ENCODE measurements at regions of chr17 and their contacts with region 1.

Region 1: GRCh38 chr17:38729886-38730525 is at the start of gene CISD3:
- DNase-seq: peak in 1 of 2 experiments; percentile 84
- H3K4me3 ChIP-seq: peak within 1 kb of the TSS; percentile 48 to 72 (median 63)
- H3K27ac ChIP-seq: no peak within 1 kb of the TSS
- H3K4me1 ChIP-seq: peaks cover 0 to 10% (median 5%) of the 10 kb centered on the region in 4 experiments; a peak in 5 of 7 replicates
- H3K27me3 ChIP-seq: peaks cover 0 to 17% (median 7%) of the 10 kb centered on the region in 4 experiments; a peak in 3 of 7 replicates
- CTCF ChIP-seq: peak; percentile 59 to 73 (median 62)
- EP300 ChIP-seq: no peak
- POLR2A ChIP-seq: 0 out of 3 replicates have a peak, but pooled peaks of 1 of the 2 experiments have one; percentile 17
- RAD21 ChIP-seq: peak in 1 of 2 experiments; percentile 47; a peak in 2 of 4 replicates
- total RNA-seq, gene CISD3: 11.1 and 11.6 TPM in 2 replicates

Region 2: GRCh38 chr17:38711792-38712571 is 18.0 kb before region 1 on chr17:
- CTCF ChIA-PET with region 1: interaction called, 49 read pairs
- POLR2A ChIA-PET with region 1: interaction called, 13 read pairs
- DNase-seq: no peak
- H3K4me3 ChIP-seq: no peak overlapping the region
- H3K27ac ChIP-seq: no peak overlapping the region
- H3K4me1 ChIP-seq: peaks cover 9 to 36% (median 25%) of the 10 kb centered on the region in 4 experiments
- H3K27me3 ChIP-seq: peaks cover 1 to 26% (median 15%) of the 10 kb centered on the region in 4 experiments
- CTCF ChIP-seq: no peak
- EP300 ChIP-seq: no peak
- POLR2A ChIP-seq: no peak
- RAD21 ChIP-seq: no peak

Region 3: DNA sequence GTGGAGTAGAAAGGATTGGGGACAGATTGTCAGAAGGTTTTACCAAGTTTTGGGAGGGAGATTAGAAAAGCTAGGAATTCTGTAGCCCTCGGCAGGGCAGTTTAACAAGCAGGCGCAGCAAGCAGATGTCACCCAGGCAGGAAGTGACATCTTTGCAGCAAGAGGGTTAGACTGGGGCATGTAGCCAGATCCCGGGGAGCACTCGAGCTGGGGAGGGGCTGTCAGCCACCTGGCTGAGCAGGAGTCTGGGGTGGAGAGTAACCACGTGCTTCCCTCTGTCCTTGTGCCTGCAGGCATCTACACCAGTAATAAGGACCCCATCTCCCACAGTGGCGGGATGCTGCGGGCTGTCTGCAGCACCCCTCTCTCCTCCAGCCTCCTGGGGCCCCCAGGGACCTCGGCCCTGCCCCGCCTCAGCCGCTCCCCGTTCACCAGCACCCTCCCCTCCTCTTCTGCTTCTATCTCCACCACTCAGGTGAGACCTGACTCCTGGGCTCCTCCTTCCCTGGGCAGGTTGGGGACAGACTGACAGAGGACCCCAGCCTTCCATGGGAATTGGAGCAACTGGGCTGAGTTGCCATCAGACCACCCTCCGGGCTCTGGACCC is 12.8 kb before region 1 on chr17:
- CTCF ChIA-PET with region 1: interaction called, 49 read pairs
- POLR2A ChIA-PET with region 1: interaction called, 29 read pairs
- DNase-seq: no peak
- H3K4me3 ChIP-seq: no peak overlapping the region
- H3K27ac ChIP-seq: no peak overlapping the region
- H3K4me1 ChIP-seq: peaks cover 14 to 41% (median 25%) of the 10 kb centered on the region in 4 experiments
- H3K27me3 ChIP-seq: peaks cover 0 to 11% (median 7%) of the 10 kb centered on the region in 4 experiments; a peak in 6 of 7 replicates
- CTCF ChIP-seq: no peak
- EP300 ChIP-seq: no peak
- POLR2A ChIP-seq: no peak
- RAD21 ChIP-seq: no peak

Region 4: GRCh38 chr17:38742411-38743308 is 12.7 kb after region 1 on chr17:
- CTCF ChIA-PET with region 1: interaction called, 40 read pairs
- POLR2A ChIA-PET with region 1: interaction called, 40 read pairs
- DNase-seq: no peak
- H3K4me3 ChIP-seq: peak overlapping the region in 2 of 4 experiments; percentile 13 to 39; a peak in 2 of 8 replicates
- H3K27ac ChIP-seq: 0 out of 2 replicates have a peak overlapping the region, but pooled peaks have one; percentile 26
- H3K4me1 ChIP-seq: peaks cover 7 to 37% (median 22%) of the 10 kb centered on the region in 4 experiments
- H3K27me3 ChIP-seq: no peaks in the 10 kb centered on the region
- CTCF ChIP-seq: no peak
- EP300 ChIP-seq: no peak
- POLR2A ChIP-seq: no peak
- RAD21 ChIP-seq: no peak

Region 5: DNA sequence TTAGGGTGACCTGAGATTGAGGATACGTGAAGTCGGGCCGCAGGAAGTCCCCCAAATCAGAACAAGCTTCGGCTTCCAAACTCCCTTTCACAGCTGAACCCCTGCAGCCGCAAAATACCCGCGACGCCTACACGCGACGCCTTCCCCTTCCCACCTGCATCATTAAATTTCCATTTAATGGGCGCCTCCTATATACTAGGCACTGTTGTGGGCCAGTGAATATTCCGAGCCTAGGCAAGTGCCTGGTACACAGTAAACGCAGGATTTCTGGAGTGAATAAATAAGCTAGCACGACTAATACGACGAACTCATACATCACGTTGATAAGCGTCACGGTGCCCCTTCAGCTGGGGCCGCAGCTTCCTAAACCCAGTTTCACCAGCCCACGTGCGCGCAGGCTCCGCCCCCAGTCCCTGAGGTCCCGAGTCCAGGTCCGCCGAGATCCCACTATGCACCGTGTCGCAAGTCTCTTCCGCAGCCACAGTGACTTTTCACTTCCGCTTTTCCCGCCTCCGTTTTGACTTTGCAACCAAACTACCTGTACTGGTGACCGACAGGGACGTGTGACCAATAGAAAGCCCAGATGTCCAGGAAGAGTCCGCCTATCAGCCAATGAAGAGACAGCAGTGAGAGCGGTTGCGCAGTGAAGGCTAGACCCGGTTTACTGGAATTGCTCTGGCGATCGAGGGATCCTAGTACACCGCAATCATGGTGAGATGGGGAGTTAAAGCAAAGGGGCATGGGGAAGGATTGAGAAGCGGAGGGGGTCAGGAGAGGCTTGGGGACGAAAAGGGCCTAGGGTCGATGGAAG is 22.3 kb after region 1 on chr17 and contains the start of gene PSMB3:
- CTCF ChIA-PET with region 1: interaction called, 10 read pairs
- POLR2A ChIA-PET with region 1: interaction called, 40 read pairs
- DNase-seq: peak; percentile 88 to 96
- H3K4me3 ChIP-seq: peak within 1 kb of the TSS; percentile 86 to 99 (median 90)
- H3K27ac ChIP-seq: peak within 1 kb of the TSS; percentile 67; the same call in 1 of the 2 replicates
- H3K4me1 ChIP-seq: peaks cover 0 to 5% (median 3%) of the 10 kb centered on the region in 4 experiments; a peak in 4 of 7 replicates
- H3K27me3 ChIP-seq: peaks cover 0 to 11% (median 5%) of the 10 kb centered on the region in 4 experiments; a peak in 5 of 7 replicates
- CTCF ChIP-seq: 0 out of 4 replicates have a peak, but pooled peaks of 1 of the 3 experiments have one; percentile 3
- EP300 ChIP-seq: no peak
- POLR2A ChIP-seq: peak in 1 of 2 experiments; percentile 75; a peak in 1 of 3 replicates
- RAD21 ChIP-seq: no peak
- total RNA-seq, gene PSMB3: 291 and 301 TPM in 2 replicates

Region 6: DNA sequence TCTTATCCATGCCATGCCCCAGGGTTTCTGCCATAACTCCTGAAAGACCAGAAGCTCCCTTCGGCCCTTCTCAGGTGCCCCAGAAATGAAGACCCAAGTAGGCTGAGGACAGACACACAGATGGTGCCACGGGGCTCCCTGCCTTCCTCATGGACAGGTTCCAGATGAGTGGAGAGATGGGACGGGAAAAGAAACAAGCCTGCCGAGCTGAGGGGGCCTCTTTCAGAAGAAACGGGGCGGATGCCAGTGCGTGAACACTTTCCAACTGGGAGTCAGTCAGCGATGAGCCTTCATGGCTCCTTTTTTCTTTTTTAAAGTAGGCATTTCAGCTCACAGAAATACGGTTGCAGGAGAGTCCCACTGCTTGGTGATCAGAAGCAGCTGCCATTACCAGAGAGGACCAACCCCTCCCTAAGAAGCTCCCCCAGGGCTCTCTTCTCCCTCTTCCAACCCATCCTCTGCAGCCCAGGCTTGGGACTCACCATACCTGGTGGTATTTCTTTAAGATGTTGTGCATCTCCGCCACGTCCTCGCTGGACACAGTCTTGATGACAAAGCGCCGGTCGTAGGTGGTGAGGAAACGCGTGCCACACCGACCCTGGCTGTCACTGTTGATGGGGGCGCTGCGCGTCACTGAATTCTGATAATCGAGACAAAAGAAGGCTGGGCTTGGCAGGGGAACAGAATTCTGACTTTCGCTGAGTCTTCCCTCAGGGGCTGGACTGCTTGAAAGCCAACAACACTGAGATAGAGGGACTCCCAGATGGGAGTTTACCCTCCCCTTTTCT is 50.2 kb after region 1 on chr17:
- CTCF ChIA-PET with region 1: no interaction called
- POLR2A ChIA-PET with region 1: no interaction called
- DNase-seq: no peak
- H3K4me3 ChIP-seq: no peak overlapping the region
- H3K27ac ChIP-seq: no peak overlapping the region
- H3K4me1 ChIP-seq: no peaks in the 10 kb centered on the region
- H3K27me3 ChIP-seq: no peaks in the 10 kb centered on the region
- CTCF ChIP-seq: no peak
- EP300 ChIP-seq: no peak
- POLR2A ChIP-seq: no peak
- RAD21 ChIP-seq: no peak